ENCODE measurements at regions of chr3 and their contacts with region 1.

Region 1: GRCh38 chr3:136149667-136150066 is 46.5 kb downstream of the MSL2 start:
- DNase-seq: no peak
- H3K4me3 Mint-ChIP-seq: peak overlapping the region; percentile 17
- H3K27ac Mint-ChIP-seq: peak overlapping the region; percentile 88
- H3K4me1 Mint-ChIP-seq: peaks cover 69% of the 10 kb centered on the region
- H3K27me3 Mint-ChIP-seq: no peaks in the 10 kb centered on the region

Region 2: DNA sequence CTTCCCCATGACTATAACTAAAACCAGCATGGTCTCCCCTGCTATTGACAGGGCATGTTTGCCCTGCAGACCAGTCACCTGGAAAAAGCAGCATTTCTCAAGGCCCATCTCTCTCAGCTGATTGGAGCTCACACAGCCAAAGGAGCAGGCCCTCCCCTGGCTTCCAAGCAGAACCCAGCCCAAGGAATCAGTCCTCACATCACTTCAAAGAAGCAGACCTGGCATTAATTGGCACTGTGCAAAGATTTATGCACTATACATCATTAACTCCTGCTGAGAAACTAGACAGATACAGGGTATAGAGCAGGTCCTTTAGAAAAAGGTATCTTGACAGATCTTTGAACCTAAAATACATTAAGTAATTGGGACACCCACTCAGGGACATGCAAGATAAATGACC is 507.9 kb before region 1 on chr3:
- CTCF ChIA-PET with region 1: no interaction called
- POLR2A ChIA-PET with region 1: no interaction called
- intact Hi-C with region 1: no loop called
- DNase-seq: no peak
- H3K4me3 Mint-ChIP-seq: no peak overlapping the region
- H3K27ac Mint-ChIP-seq: no peak overlapping the region
- H3K4me1 Mint-ChIP-seq: no peaks in the 10 kb centered on the region
- H3K27me3 Mint-ChIP-seq: no peaks in the 10 kb centered on the region

Region 3: DNA sequence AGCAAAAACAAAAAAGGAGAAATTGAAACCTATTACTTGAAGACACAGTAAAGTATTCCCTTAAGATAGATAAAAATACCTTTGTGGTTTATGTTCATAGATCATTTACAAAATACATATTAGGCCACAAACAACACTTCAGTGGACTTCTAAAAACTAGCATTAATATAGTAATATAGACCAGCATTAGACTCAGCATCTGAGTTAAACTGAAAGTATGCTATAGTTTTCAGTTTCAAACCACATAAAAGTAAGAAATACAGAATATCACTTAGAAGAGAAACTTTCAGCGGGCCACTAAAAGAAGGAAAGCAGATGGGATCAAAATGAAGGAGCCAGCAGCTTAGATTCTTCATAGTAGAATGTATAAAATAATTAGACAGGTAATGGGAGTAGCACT is 40.2 kb before region 1 on chr3:
- CTCF ChIA-PET with region 1: no interaction called
- POLR2A ChIA-PET with region 1: no interaction called
- intact Hi-C with region 1: loop called (anchors 2 kb)
- DNase-seq: no peak
- H3K4me3 Mint-ChIP-seq: no peak overlapping the region
- H3K27ac Mint-ChIP-seq: no peak overlapping the region
- H3K4me1 Mint-ChIP-seq: peaks cover 11% of the 10 kb centered on the region
- H3K27me3 Mint-ChIP-seq: no peaks in the 10 kb centered on the region

Region 4: DNA sequence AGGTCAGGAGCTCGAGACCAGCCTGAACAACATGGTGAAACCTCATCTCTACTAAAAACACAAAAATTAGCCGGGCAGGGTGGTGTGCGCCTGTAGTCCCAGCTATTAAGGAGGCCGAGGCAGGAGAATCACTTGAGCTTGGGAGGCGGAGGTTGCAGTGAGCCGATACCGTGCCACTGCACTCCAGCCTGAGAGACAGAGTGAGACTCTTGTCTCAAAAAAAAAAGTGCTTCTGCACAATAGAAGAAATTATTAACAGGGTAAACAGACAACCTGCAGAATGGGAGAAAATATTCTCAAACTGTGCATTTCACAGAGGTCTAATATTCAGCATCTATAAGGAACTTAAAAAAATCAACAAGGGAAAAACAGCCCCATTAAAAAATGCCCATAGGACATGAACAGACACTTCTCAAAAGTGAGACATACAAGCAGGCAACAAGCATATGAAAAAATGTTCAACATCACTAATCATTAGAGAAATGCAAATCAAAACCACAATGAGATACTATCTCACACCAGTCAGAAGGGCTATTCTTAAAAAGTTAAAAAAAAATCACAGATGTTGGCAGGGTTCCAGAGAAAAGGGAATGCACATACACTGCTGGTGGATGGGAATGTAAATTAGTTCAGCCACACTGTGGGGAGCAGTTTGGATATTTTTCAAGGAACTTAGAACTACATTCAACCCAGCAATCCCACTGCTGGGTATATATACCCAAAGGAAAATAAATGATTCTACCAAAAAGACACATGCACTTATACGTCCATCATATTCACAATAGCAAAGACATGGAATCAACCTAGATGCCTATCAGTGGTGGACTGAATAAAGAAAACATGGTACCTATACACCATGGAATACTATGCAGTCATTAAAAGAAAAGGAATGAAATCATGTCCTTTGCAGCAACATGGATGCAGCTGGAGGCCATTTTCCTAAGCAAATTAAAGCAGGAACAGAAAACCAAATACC is 29.0 kb before region 1 on chr3:
- CTCF ChIA-PET with region 1: no interaction called
- POLR2A ChIA-PET with region 1: no interaction called
- intact Hi-C with region 1: no loop called
- DNase-seq: no peak
- H3K4me3 Mint-ChIP-seq: no peak overlapping the region
- H3K27ac Mint-ChIP-seq: no peak overlapping the region
- H3K4me1 Mint-ChIP-seq: no peaks in the 10 kb centered on the region
- H3K27me3 Mint-ChIP-seq: no peaks in the 10 kb centered on the region

Region 5: DNA sequence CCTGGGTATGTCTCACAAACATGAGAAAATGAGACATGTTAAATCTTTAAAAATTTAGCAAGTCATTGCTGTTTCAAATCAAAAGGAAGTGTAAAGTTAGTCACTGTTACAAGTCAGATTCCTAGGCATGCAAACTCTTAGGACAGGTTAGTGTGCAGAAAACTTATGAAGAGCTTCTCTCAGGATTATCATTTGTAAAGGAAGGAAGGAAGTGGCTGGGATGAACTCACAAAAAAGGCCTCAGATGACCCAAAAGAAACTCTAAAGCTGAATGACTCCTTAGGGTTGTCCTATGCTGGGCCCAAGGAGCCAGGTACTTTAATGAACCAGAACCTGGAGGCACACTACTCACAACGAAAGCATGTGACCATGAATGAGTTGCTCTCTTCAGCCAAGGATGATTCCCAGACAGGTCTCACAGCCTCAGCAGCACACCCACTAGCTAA is 21.5 kb after region 1 on chr3:
- CTCF ChIA-PET with region 1: no interaction called
- POLR2A ChIA-PET with region 1: interaction called, 3 read pairs
- intact Hi-C with region 1: loop called (anchors 1 kb)
- DNase-seq: peak; percentile 51
- H3K4me3 Mint-ChIP-seq: no peak overlapping the region
- H3K27ac Mint-ChIP-seq: no peak overlapping the region
- H3K4me1 Mint-ChIP-seq: peaks cover 42% of the 10 kb centered on the region
- H3K27me3 Mint-ChIP-seq: no peaks in the 10 kb centered on the region

Region 6: DNA sequence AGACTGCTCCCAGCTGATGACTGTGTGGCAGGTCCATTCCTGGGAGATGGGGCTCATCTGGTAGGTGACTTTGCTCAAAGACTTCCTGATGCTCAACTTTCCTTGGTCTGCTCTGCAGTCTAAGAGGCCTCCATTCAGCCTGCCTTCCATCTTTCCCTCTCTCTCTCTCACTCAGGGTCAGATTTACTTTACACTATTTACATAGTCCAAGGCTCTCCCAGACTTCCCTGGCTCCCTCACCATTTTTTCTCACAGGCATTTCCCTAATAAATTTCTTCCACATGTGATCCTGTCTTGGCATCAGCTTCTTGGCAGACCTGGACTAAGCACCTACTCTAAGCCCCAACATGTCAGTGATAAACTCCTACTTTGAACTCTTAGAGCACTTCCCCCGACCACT is 87.4 kb after region 1 on chr3:
- CTCF ChIA-PET with region 1: no interaction called
- POLR2A ChIA-PET with region 1: no interaction called
- intact Hi-C with region 1: no loop called
- DNase-seq: no peak
- H3K4me3 Mint-ChIP-seq: no peak overlapping the region
- H3K27ac Mint-ChIP-seq: no peak overlapping the region
- H3K4me1 Mint-ChIP-seq: no peaks in the 10 kb centered on the region
- H3K27me3 Mint-ChIP-seq: peaks cover 2% of the 10 kb centered on the region

Measured in activated CD4-positive, alpha-beta memory T cell treated with anti-CD3 and anti-CD28 coated beads for 36 hours (primary cell).